ENCODE measurements at regions of chr11 and their contacts with region 1.

Region 1: DNA sequence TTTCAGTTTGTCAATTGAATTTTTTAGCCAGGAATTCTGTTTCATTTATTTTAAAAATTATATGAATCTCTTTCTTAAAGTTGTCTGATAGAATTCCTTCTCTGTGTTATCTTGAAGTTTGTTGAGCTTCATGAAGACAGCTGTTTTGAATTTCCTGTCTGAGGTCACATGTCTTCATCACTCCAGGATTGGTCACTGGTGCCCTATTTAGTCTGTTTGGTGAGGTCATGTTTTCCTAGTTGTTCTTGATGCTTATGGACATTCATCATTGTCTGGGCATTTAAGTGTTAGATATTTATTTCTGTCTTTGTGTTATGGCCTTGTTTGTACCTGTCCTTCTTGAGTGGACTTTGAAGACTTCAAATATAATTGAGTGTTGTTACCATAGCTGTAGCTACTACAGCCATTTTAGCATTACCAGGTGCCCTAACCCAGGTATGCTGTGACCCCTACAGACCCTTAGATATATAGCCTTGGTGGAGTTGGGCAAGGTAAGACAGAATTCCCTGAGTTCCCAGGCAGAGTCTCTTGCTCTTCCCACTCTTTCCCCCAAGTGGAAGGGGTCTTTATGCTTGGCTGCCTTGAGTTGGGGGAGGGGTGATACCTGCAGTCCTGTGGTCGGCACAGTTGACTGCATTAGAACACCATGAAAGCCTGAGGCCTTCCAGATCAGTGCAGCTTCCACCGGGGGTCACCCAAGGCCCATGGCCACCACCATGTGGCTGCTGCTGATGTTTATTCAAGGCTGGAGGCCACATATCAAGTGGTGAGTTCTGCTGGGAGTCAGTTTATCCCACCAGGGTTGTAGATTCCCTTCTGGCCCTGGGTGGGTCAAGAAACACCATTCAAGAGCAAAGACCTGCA is 229.6 kb downstream of the DYNC2H1 start:
- DNase-seq: peak; percentile 66
- ATAC-seq: peak; percentile 40
- H3K4me3 ChIP-seq: no peak overlapping the region
- H3K27ac ChIP-seq: no peak overlapping the region
- H3K4me1 ChIP-seq: no peaks in the 10 kb centered on the region
- H3K27me3 ChIP-seq: no peaks in the 10 kb centered on the region
- CTCF ChIP-seq: peak; percentile 35; the same call in 1 of the 2 replicates
- POLR2A ChIP-seq: no peak
- RAD21 ChIP-seq: peak; percentile 55

Region 2: GRCh38 chr11:103596315-103596714 is 257.5 kb after region 1 on chr11:
- CTCF ChIA-PET with region 1: no interaction called
- POLR2A ChIA-PET with region 1: no interaction called
- dilution Hi-C with region 1: no loop called
- in situ Hi-C with region 1: loop called (anchors 5 kb)
- intact Hi-C with region 1: loop called (anchors 1 kb)
- DNase-seq: no peak
- ATAC-seq: no peak
- H3K4me3 ChIP-seq: no peak overlapping the region
- H3K27ac ChIP-seq: no peak overlapping the region
- H3K4me1 ChIP-seq: no peaks in the 10 kb centered on the region
- H3K27me3 ChIP-seq: no peaks in the 10 kb centered on the region
- CTCF ChIP-seq: no peak
- POLR2A ChIP-seq: no peak
- RAD21 ChIP-seq: no peak

Measured in IMR-90 (cell line).